ENCODE measurements at regions of chr6 and their contacts with region 1.

Region 1: GRCh38 chr6:24855395-24856245 is 56.9 kb upstream of the ARMH2 start:
- DNase-seq: peak; percentile 57
- H3K4me3 Mint-ChIP-seq: no peak overlapping the region
- H3K27ac Mint-ChIP-seq: peak overlapping the region; percentile 31
- H3K4me1 Mint-ChIP-seq: peaks cover 49% of the 10 kb centered on the region
- H3K27me3 Mint-ChIP-seq: no peaks in the 10 kb centered on the region

Region 2: DNA sequence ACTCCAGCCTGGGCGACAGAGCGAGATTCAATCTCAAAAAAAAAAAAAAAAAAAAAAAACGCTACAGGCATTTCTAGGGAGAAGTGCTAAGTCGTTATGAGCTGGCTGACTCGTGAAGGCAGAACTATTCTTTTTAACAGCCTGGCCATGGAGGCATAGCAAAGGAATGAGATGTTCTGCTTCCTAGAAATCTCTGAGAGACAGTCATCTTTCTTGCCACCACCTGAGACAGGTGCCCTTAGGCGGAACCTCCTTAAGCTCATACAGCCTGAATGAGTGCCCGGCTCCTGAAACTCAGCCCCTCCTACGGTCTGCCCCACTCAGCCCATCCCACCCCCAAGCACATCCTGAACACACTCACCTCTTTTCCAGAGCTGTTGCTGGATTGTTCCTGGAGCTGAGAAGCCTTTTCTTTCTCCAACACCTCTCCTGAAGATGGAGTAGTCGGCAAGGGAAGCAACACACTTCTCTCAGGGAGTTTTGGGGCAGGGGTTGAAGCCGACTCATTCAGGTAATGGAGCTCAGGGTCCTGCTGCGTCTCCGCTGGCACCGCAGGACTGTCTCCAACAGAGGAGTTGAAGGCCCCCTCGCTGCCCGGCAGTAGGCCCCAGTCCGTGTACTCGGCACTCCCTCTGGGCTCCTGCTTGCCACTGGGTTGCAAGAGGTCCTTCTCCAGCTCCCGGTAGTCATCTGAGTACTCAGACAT is 260.0 kb before region 1 on chr6:
- intact Hi-C with region 1: no loop called
- DNase-seq: no peak
- H3K4me3 Mint-ChIP-seq: no peak overlapping the region
- H3K27ac Mint-ChIP-seq: no peak overlapping the region
- H3K4me1 Mint-ChIP-seq: no peaks in the 10 kb centered on the region
- H3K27me3 Mint-ChIP-seq: peaks cover 5% of the 10 kb centered on the region

Region 3: GRCh38 chr6:24910961-24911712 is 55.5 kb after region 1 on chr6:
- intact Hi-C with region 1: loop called (anchors 2 kb)
- DNase-seq: no peak
- H3K4me3 Mint-ChIP-seq: peak overlapping the region; percentile 79
- H3K27ac Mint-ChIP-seq: peak overlapping the region; percentile 61
- H3K4me1 Mint-ChIP-seq: peaks cover 70% of the 10 kb centered on the region
- H3K27me3 Mint-ChIP-seq: no peaks in the 10 kb centered on the region

Region 4: DNA sequence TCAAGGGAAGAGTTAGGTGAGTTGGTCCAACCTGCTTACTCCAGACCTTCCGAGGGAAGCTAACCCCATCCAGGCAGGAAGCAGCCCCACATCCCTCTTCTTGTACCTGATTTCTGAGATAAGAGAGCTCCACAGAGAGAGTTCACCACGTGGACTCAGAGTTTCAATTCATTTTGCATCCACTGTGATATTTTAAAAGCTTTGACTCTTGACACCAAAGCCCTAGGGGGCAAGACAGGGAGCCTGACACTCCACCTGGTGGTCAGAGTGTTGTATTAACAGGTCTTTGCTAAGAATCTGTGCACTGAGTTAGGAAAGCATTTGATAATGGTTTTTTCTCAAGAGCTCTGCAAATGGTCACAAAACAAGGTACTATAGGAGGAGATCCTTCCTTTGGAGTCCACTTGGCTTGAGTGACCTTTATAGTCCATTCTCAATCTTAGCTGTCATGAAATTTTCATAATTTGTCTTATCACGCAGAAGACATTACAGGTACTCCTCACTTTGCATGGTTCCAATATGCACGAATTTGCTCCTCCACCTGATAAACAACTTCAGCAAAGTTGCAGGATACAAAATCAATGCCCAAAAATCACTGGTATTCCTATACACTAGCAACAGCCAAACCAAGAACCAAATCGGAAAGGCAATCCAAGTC is 136.3 kb after region 1 on chr6:
- intact Hi-C with region 1: loop called (anchors 1 kb)
- DNase-seq: peak; percentile 59
- H3K4me3 Mint-ChIP-seq: no peak overlapping the region
- H3K27ac Mint-ChIP-seq: peak overlapping the region; percentile 33
- H3K4me1 Mint-ChIP-seq: peaks cover 30% of the 10 kb centered on the region
- H3K27me3 Mint-ChIP-seq: no peaks in the 10 kb centered on the region

Region 5: GRCh38 chr6:25166955-25167748 is 311.5 kb after region 1 on chr6:
- intact Hi-C with region 1: loop called (anchors 5 kb)
- DNase-seq: no peak
- H3K4me3 Mint-ChIP-seq: peak overlapping the region; percentile 91
- H3K27ac Mint-ChIP-seq: peak overlapping the region; percentile 97
- H3K4me1 Mint-ChIP-seq: peaks cover 69% of the 10 kb centered on the region
- H3K27me3 Mint-ChIP-seq: no peaks in the 10 kb centered on the region